ENCODE measurements at regions of chr2 and their contacts with region 1.

Region 1: GRCh38 chr2:1550658-1551316 is 137.5 kb downstream of the TPO start:
- DNase-seq: peak; percentile 80
- ATAC-seq: peak; percentile 80
- H3K4me3 Mint-ChIP-seq: no peak overlapping the region
- H3K27ac Mint-ChIP-seq: no peak overlapping the region
- H3K4me1 Mint-ChIP-seq: peaks cover 9% of the 10 kb centered on the region
- H3K27me3 Mint-ChIP-seq: peaks cover 4% of the 10 kb centered on the region

Region 2: DNA sequence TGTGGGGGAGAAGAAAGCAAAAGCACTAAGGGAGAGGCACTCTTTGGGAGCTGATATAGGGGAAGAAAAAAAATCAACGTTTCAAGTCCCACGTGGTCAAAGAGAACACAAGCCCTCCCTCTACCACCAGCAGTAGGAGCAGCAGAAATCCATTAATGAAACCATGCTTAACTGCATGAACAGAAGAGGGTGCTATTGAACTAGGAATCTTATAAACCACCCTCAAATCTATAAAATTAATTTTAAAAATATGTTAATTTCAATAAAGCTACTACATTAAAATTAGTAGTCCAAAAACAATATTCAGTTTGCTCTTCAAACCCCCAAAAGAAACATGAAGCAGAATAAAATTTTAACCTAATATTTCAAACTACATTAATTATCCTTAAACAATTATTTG is 1021.4 kb before region 1 on chr2:
- CTCF ChIA-PET with region 1: interaction called, 3 read pairs
- POLR2A ChIA-PET with region 1: no interaction called
- intact Hi-C with region 1: loop called in 1 of 2 experiments (anchors 2 kb)
- DNase-seq: no peak
- ATAC-seq: no peak
- H3K4me3 Mint-ChIP-seq: no peak overlapping the region
- H3K27ac Mint-ChIP-seq: no peak overlapping the region
- H3K4me1 Mint-ChIP-seq: no peaks in the 10 kb centered on the region
- H3K27me3 Mint-ChIP-seq: peaks cover 5% of the 10 kb centered on the region

Region 3: DNA sequence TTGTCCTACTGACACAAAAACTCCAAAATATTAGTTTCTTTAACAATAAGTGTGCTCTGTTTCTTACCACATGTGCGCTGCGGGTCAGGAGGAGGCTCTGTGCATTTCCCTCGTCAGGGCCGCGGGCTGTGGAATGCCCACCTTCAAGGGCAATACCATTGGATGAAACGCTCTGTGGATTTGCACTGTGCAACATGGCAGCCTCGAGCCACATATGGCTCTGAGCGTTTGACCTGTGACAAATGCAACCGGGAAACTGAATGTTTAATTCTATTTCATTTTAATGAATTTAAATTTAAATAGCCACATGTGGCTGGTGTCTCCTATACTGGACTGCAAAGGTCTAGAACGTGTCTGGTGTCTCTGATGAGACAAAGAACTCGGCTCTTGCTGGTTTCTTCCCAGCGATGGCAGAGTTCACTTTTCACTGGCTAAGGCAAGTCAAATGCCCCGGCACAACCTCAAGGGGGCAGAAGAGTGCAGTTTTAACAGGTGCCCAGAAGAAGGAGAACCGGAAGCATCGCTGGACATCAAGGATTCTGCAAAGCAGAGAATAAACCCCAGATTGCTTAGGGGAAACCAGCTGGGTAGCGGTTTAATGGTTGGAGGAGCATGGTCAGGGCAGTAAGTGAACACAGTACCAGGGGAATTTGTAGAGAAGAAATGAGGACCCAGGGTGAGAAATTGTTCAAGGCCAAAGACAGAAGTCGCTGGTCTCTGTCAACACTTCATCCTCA is 836.6 kb before region 1 on chr2:
- CTCF ChIA-PET with region 1: interaction called, 3 read pairs
- POLR2A ChIA-PET with region 1: no interaction called
- intact Hi-C with region 1: loop called (anchors 1 to 10 kb)
- DNase-seq: peak; percentile 71
- ATAC-seq: peak; percentile 68
- H3K4me3 Mint-ChIP-seq: no peak overlapping the region
- H3K27ac Mint-ChIP-seq: no peak overlapping the region
- H3K4me1 Mint-ChIP-seq: no peaks in the 10 kb centered on the region
- H3K27me3 Mint-ChIP-seq: peaks cover 17% of the 10 kb centered on the region

Region 4: DNA sequence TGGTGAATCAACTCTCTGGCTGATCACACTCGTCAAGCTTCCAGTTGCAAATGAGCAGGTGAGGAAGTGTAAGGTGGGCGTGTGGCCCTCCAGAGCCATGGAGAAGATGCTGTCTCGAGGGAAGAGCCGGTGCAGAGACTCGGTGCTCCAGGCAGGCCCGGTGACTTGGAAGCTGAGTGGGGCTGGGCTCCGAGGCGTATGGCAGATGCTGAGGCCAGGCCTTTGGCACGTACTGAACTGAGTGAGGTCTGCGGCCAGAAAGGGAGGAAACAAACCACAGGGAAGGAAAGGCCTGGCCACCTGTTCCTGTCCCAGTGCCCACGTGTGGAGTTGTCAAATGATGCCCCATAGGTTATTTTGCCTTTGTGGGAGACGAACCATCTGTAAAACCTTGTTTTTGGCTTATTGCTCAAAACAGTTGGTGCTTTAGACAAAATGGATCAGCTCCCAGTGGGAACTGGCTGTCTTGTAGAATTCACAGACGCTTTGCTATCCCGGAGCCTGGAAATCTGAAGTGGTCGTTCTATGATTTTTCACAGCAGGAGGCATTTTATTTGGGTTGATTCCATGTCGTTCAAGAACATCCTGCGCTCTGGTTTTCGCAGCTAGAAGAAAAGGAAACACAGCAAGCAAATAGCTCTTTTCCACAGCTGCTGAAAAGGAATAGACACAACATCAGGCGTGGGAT is 756.1 kb before region 1 on chr2:
- CTCF ChIA-PET with region 1: no interaction called
- POLR2A ChIA-PET with region 1: no interaction called
- intact Hi-C with region 1: no loop called
- DNase-seq: no peak
- ATAC-seq: no peak
- H3K4me3 Mint-ChIP-seq: no peak overlapping the region
- H3K27ac Mint-ChIP-seq: no peak overlapping the region
- H3K4me1 Mint-ChIP-seq: no peaks in the 10 kb centered on the region
- H3K27me3 Mint-ChIP-seq: no peaks in the 10 kb centered on the region

Region 5: GRCh38 chr2:854460-854859 is 696.3 kb before region 1 on chr2:
- CTCF ChIA-PET with region 1: interaction called, 3 read pairs
- POLR2A ChIA-PET with region 1: no interaction called
- intact Hi-C with region 1: loop called (anchors 2 to 5 kb)
- DNase-seq: peak; percentile 52
- ATAC-seq: no peak
- H3K4me3 Mint-ChIP-seq: no peak overlapping the region
- H3K27ac Mint-ChIP-seq: no peak overlapping the region
- H3K4me1 Mint-ChIP-seq: peaks cover 12% of the 10 kb centered on the region
- H3K27me3 Mint-ChIP-seq: no peaks in the 10 kb centered on the region

Region 6: DNA sequence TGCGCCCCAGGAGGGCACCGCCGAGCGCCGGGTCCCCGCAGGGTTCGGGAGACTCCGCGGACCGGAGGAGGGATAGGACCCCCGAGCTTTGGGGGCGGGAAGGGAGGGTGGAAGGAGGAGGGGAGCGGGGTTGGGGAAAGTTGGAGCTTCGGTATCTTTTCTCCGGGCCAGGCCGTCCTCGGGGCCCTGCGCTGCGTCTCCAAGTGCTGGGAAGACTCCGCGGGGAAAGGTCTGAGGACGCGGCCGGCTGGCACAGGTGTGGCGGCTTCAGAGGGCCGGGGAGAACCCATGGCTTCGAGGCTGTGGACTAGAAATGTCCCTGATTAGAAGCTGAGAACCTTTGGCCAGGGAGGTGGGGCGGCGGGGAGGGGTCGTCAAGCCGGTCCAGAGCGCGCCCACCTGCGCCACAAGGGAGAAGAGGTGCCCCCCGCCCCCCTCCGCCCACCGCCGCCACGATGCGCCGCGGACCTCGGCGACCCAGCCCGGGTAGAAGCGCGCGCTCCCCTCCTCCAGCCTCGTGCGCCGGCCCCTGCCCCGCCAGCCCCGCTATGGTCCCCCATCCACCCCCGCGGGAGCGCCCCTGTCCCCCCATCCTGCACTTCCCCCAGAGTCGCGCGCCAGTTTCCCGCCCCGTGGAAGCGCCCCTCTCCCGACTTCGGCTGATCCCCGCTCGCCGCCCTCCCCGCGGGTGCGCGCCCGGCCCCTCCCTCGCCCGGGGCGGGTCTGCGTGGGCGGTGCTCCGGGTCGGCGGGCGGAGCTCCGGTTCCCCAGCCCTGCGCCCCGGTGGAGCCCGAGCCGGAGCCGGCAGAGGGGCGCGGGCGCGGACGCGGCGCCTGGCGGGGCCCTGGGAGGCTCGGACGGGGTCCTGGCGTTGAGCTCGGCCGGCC is 600.5 kb before region 1 on chr2 and contains the start of gene SNTG2:
- CTCF ChIA-PET with region 1: no interaction called
- POLR2A ChIA-PET with region 1: no interaction called
- intact Hi-C with region 1: loop called in 1 of 2 experiments (anchors 5 kb)
- DNase-seq: peak; percentile 71
- ATAC-seq: peak; percentile 50
- H3K4me3 Mint-ChIP-seq: peak within 1 kb of the TSS; percentile 66
- H3K27ac Mint-ChIP-seq: no peak within 1 kb of the TSS
- H3K4me1 Mint-ChIP-seq: peaks cover 23% of the 10 kb centered on the region
- H3K27me3 Mint-ChIP-seq: peaks cover 40% of the 10 kb centered on the region
- total RNA-seq, gene SNTG2: 0.25 to 0.57 TPM

Region 7: DNA sequence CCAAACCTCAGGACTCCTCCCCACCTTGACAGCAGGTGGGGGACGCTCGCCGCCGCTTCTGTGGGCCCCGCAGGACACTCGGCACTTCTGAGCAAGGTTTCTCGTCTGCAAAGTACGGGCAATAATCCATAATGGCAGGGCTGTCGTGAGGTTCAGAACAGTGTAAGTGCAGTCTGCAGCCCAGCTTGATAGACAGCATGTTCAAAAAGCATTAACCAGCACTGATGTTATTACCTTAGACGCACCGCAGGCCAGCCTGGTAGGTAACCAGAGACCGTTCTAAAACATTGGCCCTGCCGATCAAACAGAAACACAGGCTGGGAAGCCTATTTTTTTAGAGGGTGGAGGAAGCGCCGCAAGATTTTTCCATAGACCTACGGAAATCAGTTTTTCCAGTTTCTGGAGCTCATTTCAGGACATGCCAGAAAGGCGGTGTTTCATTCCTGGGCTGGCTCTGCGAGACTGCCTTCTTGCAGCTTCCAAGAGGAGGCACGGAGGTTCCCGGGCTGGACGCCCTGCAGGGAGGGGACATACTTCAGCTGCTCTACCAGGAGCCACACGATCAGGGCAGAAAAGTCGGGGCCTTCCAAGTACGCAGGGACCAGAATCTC is 11.1 kb after region 1 on chr2:
- CTCF ChIA-PET with region 1: interaction called, 18 read pairs
- POLR2A ChIA-PET with region 1: no interaction called
- intact Hi-C with region 1: no loop called
- DNase-seq: no peak
- ATAC-seq: no peak
- H3K4me3 Mint-ChIP-seq: no peak overlapping the region
- H3K27ac Mint-ChIP-seq: no peak overlapping the region
- H3K4me1 Mint-ChIP-seq: peaks cover 16% of the 10 kb centered on the region
- H3K27me3 Mint-ChIP-seq: no peaks in the 10 kb centered on the region

Region 8: GRCh38 chr2:1769703-1770422 is 219.1 kb after region 1 on chr2:
- CTCF ChIA-PET with region 1: interaction called, 3 read pairs
- POLR2A ChIA-PET with region 1: no interaction called
- intact Hi-C with region 1: loop called in 1 of 2 experiments (anchors 5 kb)
- DNase-seq: peak; percentile 78
- ATAC-seq: no peak
- H3K4me3 Mint-ChIP-seq: no peak overlapping the region
- H3K27ac Mint-ChIP-seq: no peak overlapping the region
- H3K4me1 Mint-ChIP-seq: no peaks in the 10 kb centered on the region
- H3K27me3 Mint-ChIP-seq: no peaks in the 10 kb centered on the region